Endothelial cell of umbilical vein (primary cell): ENCODE measurements at regions of chr3 and their contacts with region 1.

Region 1: DNA sequence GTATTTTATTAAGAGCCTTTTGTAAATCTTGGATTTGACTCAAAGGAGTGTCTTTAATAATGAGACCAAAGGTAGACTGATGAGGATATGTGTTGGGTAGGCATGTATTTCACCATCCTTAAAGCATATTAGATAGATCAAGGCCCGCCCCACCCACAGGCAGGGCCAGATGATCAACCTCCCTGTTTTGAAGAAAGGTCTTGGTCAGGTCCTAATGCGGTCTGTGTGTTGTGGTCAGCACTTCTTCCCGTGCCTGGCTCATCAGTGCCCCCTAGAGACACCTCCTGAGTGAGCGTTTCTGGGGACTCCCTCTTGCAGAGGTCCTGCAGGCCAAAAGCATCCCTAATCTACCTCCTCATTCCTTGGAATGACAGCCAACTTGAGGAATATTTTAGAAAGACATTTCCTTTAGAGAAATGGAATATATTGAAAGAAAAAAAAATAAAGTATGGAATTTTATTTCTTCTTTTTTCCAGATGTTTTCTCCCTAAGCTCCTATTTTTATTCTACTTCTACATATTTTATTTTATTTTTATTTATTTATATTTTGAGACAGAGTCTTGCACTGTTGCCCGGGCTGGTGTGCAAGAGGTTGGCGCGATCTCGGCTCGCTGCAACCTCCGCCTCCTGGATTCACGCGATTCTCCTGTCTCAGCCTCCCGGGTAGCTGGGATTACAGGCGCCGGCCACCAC is 6.0 kb downstream of the TM4SF4 start:
- DNase-seq: peak; percentile 93
- H3K4me3 ChIP-seq: no peak overlapping the region
- H3K27ac ChIP-seq: peak overlapping the region; percentile 64
- H3K4me1 ChIP-seq: peaks cover 12% of the 10 kb centered on the region
- H3K27me3 ChIP-seq: no peaks in the 10 kb centered on the region
- CTCF ChIP-seq: peak; percentile 91 to 93
- POLR2A ChIP-seq: no peak

Region 2: GRCh38 chr3:149339931-149340309 is 140.6 kb before region 1 on chr3:
- CTCF ChIA-PET with region 1: interaction called, 15 read pairs
- POLR2A ChIA-PET with region 1: no interaction called
- dilution Hi-C with region 1: no loop called
- intact Hi-C with region 1: loop called (anchors 1 kb)
- DNase-seq: peak; percentile 99
- H3K4me3 ChIP-seq: peak overlapping the region in 1 of 3 experiments; percentile 45
- H3K27ac ChIP-seq: peak overlapping the region; percentile 99
- H3K4me1 ChIP-seq: peaks cover 54% of the 10 kb centered on the region
- H3K27me3 ChIP-seq: no peaks in the 10 kb centered on the region
- CTCF ChIP-seq: no peak
- POLR2A ChIP-seq: peak; percentile 88

Region 3: DNA sequence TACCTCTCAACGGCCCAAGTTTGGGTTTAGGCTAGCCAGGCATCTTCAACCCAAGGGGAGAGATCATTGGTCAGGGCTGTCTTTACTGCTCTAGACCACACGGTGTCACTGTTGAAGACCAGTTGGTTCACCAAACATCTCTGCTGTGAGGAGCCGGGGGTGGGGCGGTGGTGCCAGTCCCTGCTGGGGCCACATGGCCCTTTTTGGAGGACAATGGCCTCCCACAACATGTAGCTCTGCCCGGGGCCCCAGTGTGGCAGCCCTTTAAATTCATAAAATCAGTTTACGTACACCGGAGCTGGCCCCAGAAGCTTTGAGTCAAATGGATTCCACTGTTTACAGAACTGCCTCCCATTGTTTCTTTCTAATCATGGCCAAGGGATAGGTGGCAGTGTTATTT is 127.9 kb before region 1 on chr3:
- CTCF ChIA-PET with region 1: interaction called, 35 read pairs
- POLR2A ChIA-PET with region 1: no interaction called
- dilution Hi-C with region 1: no loop called
- intact Hi-C with region 1: loop called (anchors 1 kb)
- DNase-seq: peak; percentile 70
- H3K4me3 ChIP-seq: no peak overlapping the region
- H3K27ac ChIP-seq: no peak overlapping the region
- H3K4me1 ChIP-seq: peaks cover 12% of the 10 kb centered on the region
- H3K27me3 ChIP-seq: no peaks in the 10 kb centered on the region
- CTCF ChIP-seq: peak; percentile 74
- POLR2A ChIP-seq: no peak

Region 4: GRCh38 chr3:149393345-149394160 is 86.9 kb before region 1 on chr3:
- CTCF ChIA-PET with region 1: interaction called, 14 read pairs
- POLR2A ChIA-PET with region 1: no interaction called
- dilution Hi-C with region 1: no loop called
- intact Hi-C with region 1: loop called (anchors 1 kb)
- DNase-seq: peak; percentile 88
- H3K4me3 ChIP-seq: peak overlapping the region in 1 of 3 experiments; percentile 21
- H3K27ac ChIP-seq: peak overlapping the region; percentile 90
- H3K4me1 ChIP-seq: peaks cover 31% of the 10 kb centered on the region
- H3K27me3 ChIP-seq: no peaks in the 10 kb centered on the region
- CTCF ChIP-seq: peak; percentile 84
- POLR2A ChIP-seq: no peak

Region 5: GRCh38 chr3:149401215-149401925 is 79.1 kb before region 1 on chr3:
- CTCF ChIA-PET with region 1: interaction called, 15 read pairs
- POLR2A ChIA-PET with region 1: no interaction called
- dilution Hi-C with region 1: no loop called
- intact Hi-C with region 1: no loop called
- DNase-seq: peak; percentile 78
- H3K4me3 ChIP-seq: no peak overlapping the region
- H3K27ac ChIP-seq: peak overlapping the region; percentile 62
- H3K4me1 ChIP-seq: peaks cover 26% of the 10 kb centered on the region
- H3K27me3 ChIP-seq: no peaks in the 10 kb centered on the region
- CTCF ChIP-seq: no peak
- POLR2A ChIP-seq: no peak

Region 6: DNA sequence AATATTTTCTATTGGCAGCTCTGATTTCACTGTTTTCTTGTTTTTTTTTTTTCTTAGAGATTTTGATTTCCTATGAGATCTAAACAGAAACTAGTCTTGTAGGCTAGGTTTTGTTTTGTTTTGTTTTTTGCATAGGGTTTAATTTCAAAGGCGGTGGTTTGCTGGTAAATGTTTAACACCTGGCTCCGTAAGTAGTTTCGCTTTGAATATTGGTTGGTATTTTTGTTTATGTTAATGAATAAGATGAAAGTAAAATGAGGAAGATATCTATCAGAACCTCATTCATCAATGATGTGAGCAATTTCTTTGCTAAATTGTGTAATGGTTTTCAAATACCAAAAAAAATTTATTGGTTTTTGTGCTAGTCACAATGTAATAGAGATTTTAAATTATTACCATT is 63.3 kb before region 1 on chr3:
- CTCF ChIA-PET with region 1: no interaction called
- POLR2A ChIA-PET with region 1: no interaction called
- dilution Hi-C with region 1: no loop called
- intact Hi-C with region 1: no loop called
- DNase-seq: no peak
- H3K4me3 ChIP-seq: no peak overlapping the region
- H3K27ac ChIP-seq: no peak overlapping the region
- H3K4me1 ChIP-seq: peaks cover 13% of the 10 kb centered on the region
- H3K27me3 ChIP-seq: no peaks in the 10 kb centered on the region
- CTCF ChIP-seq: no peak
- POLR2A ChIP-seq: no peak